ENCODE measurements at regions of chr12 and their contacts with region 1.

Region 1: DNA sequence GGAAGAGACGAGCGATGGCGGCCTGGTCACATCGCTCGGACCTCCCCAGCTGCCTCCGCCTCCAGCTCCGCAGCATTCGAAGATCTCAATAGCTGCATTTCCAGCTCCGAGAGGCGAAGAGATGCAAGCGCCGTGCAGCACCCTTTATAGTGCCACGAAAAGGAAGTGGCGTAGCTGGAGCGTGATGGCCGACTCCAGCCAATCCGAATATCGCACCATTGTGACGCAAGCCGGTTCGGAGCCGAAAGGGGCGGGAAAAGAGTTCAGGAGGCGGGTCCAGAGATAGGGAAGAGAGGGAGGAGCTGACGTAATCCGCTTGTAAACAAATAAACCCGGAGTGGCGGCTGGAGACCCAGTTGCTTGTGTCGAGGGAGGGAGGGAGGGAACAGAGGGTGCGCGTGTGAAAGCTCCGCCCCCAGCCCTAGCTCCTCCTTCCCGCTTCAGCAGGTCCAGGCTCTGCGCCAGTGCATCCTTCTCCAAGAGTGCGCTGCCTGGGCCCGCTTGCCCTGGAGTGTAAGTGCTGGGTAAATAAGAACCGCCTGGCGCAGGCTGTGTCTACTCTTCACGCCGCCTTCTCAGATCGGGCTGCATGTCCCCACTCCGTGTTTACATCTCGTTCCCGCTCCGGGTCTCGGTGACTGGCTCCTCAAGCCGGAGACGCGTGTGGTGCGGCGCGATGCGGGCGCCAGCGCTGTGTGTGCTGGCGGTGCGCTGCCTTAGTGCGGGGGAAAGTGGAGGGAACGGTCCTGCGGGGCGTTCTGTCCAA is at the start of gene BTG1:
- DNase-seq: peak; percentile 99 to 100
- H3K4me3 ChIP-seq: peak within 1 kb of the TSS; percentile 100
- CTCF ChIP-seq: no peak
- POLR2A ChIP-seq: peak in 1 of 2 donors; percentile 100
- total RNA-seq, gene BTG1: 113 to 250 (median 182) TPM

Region 2: DNA sequence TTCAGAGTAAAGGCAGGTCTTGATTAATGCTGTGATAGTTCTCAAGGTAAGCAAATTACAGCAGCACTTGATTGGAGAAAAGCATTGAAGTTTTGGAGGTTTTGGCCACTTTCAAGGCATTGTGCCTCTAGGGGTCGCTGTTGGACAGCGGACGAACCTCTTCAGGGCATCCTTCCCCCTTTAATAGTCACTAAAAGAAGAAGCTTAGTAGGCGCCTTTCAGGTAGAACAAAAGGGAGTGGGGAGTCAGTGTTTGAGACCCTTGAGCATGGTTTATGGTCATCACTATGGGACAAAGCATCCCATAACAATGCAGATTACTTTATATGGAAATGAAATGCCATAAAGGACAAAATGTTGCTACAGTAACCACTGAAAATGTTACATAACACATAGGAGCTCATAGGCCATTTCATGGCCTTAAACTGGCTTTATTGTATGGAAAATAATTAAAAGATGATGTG is 763.8 kb before region 1 on chr12:
- intact Hi-C with region 1: loop called (anchors 5 kb)
- DNase-seq: peak; percentile 86 to 95
- H3K4me3 ChIP-seq: no peak overlapping the region
- CTCF ChIP-seq: peak in 1 of 3 donors; percentile 63
- POLR2A ChIP-seq: no peak

Region 3: GRCh38 chr12:91811481-91812287 is 334.2 kb before region 1 on chr12:
- intact Hi-C with region 1: loop called (anchors 10 kb)
- DNase-seq: peak; percentile 73 to 90
- H3K4me3 ChIP-seq: no peak overlapping the region
- CTCF ChIP-seq: peak in 1 of 3 donors; percentile 53
- POLR2A ChIP-seq: no peak

Region 4: GRCh38 chr12:92570056-92570753 is 424.3 kb after region 1 on chr12:
- intact Hi-C with region 1: loop called (anchors 10 kb)
- DNase-seq: peak in 1 of 2 donors; percentile 86
- H3K4me3 ChIP-seq: no peak overlapping the region
- CTCF ChIP-seq: peak in 1 of 3 donors; percentile 53
- POLR2A ChIP-seq: no peak